GM18951 (cell line): ENCODE measurements at regions of chr3 and their contacts with region 1.

Region 1: DNA sequence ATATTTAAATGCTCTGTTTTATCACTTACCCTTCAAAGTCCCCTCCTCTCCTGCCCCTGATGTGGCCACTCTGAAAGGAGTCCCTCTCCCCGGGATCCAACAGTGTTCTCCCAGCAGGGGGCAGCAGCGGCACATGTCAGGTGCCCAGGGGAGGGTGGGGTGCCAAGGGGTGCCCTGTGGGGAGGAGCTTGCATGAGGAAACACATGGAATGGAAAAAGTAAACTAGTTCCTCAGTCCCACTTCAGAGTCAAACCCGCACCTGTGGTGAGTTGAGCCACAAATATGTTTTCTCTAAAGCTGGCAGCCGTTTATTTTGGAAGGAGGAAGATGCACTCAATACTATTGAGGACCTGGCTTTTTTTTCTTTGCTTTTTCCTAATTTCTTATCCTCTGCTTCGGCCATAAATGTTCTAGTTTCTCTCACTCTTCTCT is 30.1 kb upstream of the NRROS start:
- POLR2A ChIP-seq: no peak

Region 2: DNA sequence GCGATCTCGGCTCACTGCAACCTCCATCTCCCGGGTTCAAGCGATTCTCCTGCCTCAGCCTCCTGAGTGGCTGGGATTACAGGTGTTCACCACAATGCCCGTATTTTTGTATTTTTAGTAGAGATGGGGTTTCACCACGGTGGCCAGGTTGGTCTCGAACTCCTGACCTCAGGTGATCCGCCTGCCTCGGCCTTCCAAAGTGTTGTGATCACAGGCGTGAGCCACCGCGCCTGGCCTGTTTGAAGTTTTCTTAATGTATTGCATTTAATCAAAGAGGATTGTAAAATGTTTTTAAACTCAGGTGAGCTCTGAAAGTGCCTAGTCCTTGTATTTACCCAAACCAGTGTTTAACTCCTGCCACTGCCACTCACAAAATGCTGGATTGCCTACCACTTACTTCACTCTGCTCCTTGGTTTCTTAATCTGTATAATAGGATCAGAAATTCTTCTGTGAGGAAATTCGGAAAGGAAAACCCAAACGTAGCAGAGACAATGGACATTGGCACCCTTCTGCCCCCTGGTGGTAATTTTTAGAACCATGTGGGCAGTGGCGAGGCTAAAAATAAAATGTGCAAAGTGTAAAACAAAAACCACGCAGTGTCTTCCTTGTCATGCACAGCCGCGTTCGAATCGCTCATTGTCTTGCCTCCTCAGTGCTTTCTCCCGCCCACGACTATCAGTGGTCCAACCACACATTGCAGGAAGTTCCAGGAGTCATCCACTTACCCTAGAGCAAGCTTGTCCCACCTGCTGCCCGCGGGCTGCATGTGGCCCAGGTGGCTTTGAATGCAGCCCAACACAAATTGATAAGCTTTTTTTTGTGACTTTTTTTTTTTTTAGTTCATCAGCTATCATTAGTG is 75.4 kb after region 1 on chr3:
- in situ Hi-C with region 1: loop called (anchors 5 kb)
- POLR2A ChIP-seq: no peak

Region 3: DNA sequence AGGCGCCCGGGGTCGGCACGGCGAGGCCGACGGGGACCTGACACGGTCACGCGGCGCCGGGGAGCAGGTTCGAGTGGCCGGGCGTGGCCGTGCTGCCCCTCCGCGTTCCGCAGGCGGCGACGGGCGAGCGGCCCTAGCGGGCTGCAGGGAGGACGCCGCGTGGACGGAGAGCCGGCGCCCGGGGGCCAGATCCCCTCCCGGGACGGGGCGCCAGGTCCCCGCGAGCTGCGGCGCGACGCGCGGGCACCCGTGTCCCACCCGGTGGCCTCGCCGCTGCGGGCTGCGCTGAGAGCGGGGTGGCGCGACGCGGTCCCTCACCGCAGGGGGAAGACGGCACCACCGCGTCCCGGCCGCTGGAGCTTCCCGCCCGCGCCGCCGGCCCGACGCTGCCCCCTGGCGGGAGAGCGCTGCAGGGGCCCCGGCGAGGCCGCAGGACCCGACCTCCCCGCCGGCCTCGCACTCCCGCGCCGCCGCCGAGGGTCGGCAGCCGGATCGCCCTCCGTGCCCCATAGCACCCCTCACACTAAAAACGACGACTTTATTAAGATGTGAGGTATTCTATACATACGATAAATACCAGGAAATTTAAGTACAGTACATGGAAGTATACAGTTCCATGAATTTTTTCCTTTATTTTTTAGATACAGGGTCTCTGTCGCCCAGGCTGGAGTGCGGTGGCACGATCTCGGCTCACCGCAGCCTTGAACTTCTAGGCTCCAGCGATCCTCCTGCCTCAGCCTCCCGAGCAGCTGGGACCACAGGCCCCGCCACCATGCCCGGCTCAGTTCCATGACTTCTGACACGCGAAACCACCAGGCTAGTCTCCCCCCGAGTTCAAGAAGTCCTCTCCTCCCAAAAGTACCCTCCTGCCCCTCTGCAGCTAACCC is 360.5 kb after region 1 on chr3:
- in situ Hi-C with region 1: loop called (anchors 25 kb)
- POLR2A ChIP-seq: peak; percentile 35

Region 4: GRCh38 chr3:197226179-197226578 is 616.8 kb after region 1 on chr3:
- in situ Hi-C with region 1: no loop called
- POLR2A ChIP-seq: no peak